Heart left ventricle (tissue), 16 donors: ENCODE measurements at regions of chr12 and their contacts with region 1.

Region 1: GRCh38 chr12:53508534-53509199 is 1.4 kb upstream of the NPFF start:
- DNase-seq: peak; percentile 83 to 88 (median 86)
- ATAC-seq: peak; percentile 75 to 90 (median 86)
- H3K4me3 ChIP-seq: no peak overlapping the region
- H3K27ac ChIP-seq: peak overlapping the region in 10 of 12 donors; percentile 9 to 74 (median 50)
- H3K4me1 ChIP-seq: peaks cover 0 to 17% (median 9%) of the 10 kb centered on the region in 12 donors
- H3K27me3 ChIP-seq: no peaks in the 10 kb centered on the region
- CTCF ChIP-seq: peak; percentile 81 to 95 (median 90)
- POLR2A ChIP-seq: peak in 1 of 2 donors; percentile 13

Region 2: GRCh38 chr12:53427905-53428594 is 80.6 kb before region 1 on chr12:
- intact Hi-C with region 1: loop called in 3 of 10 experiments (anchors 1 to 5 kb)
- DNase-seq: no peak
- ATAC-seq: no peak
- H3K4me3 ChIP-seq: no peak overlapping the region
- H3K27ac ChIP-seq: no peak overlapping the region
- H3K4me1 ChIP-seq: peaks cover 0 to 8% (median 0%) of the 10 kb centered on the region in 12 donors
- H3K27me3 ChIP-seq: no peaks in the 10 kb centered on the region
- CTCF ChIP-seq: no peak
- POLR2A ChIP-seq: no peak